A673 (cell line): ENCODE measurements at regions of chr17 and their contacts with region 1.

Region 1: DNA sequence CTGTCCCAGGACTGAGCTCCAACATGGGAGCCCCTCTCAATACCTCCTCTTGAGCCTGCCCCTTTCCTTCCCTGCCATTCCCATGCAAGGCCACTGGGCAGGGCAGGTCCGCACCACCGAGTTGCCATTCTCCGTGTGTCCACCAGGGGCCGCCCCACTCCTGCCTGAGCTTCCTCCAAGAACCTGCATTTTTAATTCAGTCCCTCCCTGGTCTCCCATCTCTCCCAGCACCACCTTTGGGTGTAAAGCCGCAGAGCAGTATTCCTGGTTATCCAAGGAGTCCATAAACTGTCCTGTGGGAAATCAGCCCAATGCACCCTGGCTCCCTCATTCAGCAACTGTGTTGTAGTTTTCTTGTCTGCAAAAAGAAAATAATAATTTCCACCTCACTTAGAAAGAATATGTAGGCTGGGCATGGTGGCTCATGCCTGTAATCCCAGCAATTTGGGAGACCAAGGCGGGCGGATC is 15.9 kb upstream of the ANKRD40CL start:
- DNase-seq: peak; percentile 90
- H3K4me3 ChIP-seq: no peak overlapping the region
- H3K27ac ChIP-seq: no peak overlapping the region
- H3K4me1 ChIP-seq: no peaks in the 10 kb centered on the region
- H3K27me3 ChIP-seq: no peaks in the 10 kb centered on the region
- CTCF ChIP-seq: peak; percentile 99

Region 2: DNA sequence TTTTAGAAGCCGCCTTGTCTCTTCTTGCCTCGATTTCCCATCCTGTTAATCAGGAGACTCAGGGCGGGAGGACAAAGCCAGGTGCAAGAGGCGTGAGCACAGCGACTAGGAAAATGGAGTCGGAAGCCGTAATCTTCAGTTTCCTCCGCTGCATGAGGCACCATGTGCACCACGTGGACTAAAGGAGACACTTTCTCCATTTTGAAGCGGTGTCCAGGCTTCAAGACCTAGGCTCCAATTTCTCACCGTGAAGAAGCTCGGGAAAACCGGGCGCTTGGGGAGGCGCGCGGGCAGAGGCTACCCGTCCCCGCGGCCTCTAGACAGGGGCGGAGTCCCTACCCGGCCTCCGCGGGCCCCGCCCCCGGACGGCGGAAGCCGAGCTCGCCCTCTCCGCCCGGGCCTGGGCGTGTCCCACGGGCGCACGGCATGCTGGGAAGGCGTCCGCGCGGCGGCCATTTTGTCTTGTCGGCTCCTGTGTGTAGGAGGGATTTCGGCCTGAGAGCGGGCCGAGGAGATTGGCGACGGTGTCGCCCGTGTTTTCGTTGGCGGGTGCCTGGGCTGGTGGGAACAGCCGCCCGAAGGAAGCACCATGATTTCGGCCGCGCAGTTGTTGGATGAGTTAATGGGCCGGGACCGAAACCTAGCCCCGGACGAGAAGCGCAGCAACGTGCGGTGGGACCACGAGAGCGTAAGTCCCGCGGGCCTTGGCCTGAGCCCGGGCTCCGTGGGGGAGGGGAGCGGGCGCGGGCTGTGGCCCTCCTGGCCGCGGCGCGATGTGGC is 63.9 kb before region 1 on chr17 and contains the start of gene LUC7L3:
- CTCF ChIA-PET with region 1: interaction called, 10 read pairs
- POLR2A ChIA-PET with region 1: no interaction called
- intact Hi-C with region 1: no loop called
- DNase-seq: peak; percentile 98
- H3K4me3 ChIP-seq: peak within 1 kb of the TSS; percentile 83
- H3K27ac ChIP-seq: peak within 1 kb of the TSS; percentile 98
- H3K4me1 ChIP-seq: peaks cover 22% of the 10 kb centered on the region
- H3K27me3 ChIP-seq: no peaks in the 10 kb centered on the region
- CTCF ChIP-seq: no peak
- total RNA-seq, gene LUC7L3: 185 and 194 TPM in 2 replicates